Activated CD4-positive, alpha-beta T cell treated with anti-CD3 and anti-CD28 coated beads, Interleukin-2, amount 10 ng/mL, durations not matched to agents 24 days and 14 days (primary cell): ENCODE measurements at regions of chr6 and their contacts with region 1.

Region 1: DNA sequence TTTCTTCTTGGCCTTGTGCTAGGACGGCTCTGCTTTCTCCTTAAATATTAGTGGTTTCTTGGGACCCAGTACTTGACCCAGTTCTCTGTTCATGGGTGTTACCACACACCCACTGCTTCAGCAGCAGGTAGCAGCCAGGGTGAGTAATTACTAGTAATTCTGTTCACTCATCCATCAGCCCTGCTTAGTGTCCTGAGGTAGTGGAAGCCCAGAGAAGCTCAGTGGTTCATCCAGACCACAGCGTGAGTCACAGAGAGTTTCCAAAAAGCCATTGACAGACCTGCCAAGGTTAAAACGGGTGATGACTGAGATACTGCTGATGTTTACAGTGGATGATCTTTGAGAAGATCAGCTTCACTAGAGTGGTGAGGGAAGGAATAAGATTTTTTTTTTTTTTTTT is 51.7 kb upstream of the HINT3 start:
- DNase-seq: peak; percentile 83
- H3K4me3 Mint-ChIP-seq: peak overlapping the region; percentile 15
- H3K27ac Mint-ChIP-seq: peak overlapping the region; percentile 67
- H3K4me1 Mint-ChIP-seq: peaks cover 34% of the 10 kb centered on the region
- H3K27me3 Mint-ChIP-seq: no peaks in the 10 kb centered on the region

Region 2: GRCh38 chr6:125918681-125919566 is 14.1 kb after region 1 on chr6:
- intact Hi-C with region 1: loop called (anchors 1 kb)
- DNase-seq: peak; percentile 89
- H3K4me3 Mint-ChIP-seq: peak overlapping the region; percentile 88
- H3K27ac Mint-ChIP-seq: peak overlapping the region; percentile 94
- H3K4me1 Mint-ChIP-seq: peaks cover 51% of the 10 kb centered on the region
- H3K27me3 Mint-ChIP-seq: no peaks in the 10 kb centered on the region